ENCODE measurements at regions of chr16 and their contacts with region 1.

Region 1: GRCh38 chr16:71412270-71413160 is 29.3 kb downstream of the TLE7 start:
- DNase-seq: peak in 1 of 2 donors; percentile 60
- ATAC-seq: peak; percentile 59
- H3K4me3 ChIP-seq: no peak overlapping the region
- H3K27ac ChIP-seq: no peak overlapping the region
- H3K4me1 ChIP-seq: no peaks in the 10 kb centered on the region
- H3K27me3 ChIP-seq: no peaks in the 10 kb centered on the region

Region 2: DNA sequence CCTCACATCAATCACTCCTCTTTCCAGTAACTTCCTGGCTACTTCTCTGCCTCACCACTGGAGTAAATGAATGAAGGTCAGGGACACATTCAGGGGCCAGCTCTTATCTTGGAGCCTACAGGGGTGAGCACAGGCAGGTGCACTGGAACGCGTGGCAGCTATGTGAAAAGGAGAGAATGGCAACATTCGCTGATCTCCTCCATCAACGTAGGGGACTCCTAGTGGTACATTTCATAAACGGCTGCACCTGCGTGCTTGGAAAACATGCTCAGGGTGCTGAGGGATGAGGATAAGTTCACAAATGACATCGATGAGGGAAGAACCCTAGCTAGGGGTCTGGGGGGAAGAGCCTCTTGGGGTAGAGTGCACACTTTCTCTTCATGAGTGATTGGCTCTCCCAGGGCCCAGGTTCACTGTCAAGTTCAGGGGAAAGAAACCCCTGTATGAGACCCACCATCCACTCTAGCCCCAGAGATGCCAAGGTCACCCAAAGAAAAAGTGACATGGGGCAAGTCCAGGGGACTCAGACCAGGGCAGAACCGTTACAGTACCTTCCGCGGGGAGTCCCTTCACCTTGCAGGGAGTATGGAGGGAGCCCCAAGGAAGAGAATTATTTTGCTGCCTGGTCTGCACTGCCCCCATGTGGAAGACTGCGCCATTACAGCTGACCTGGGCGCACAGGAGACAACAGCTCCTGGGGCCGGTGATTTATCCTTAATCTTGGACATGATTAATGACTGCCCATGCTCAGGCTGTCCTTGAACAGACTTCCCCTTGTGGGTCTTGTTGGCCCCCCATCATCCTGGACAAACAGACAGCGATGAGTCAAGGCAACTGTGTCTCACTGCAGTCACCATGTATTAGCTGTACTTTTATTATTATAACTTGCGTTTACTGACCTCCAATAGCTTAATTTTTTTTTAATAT is 641.6 kb before region 1 on chr16:
- intact Hi-C with region 1: no loop called
- DNase-seq: peak in 1 of 2 donors; percentile 85
- ATAC-seq: peak; percentile 81
- H3K4me3 ChIP-seq: no peak overlapping the region
- H3K27ac ChIP-seq: no peak overlapping the region
- H3K4me1 ChIP-seq: no peaks in the 10 kb centered on the region
- H3K27me3 ChIP-seq: no peaks in the 10 kb centered on the region

Region 3: GRCh38 chr16:71499775-71500364 is 87.4 kb after region 1 on chr16:
- intact Hi-C with region 1: loop called (anchors 2 kb)
- DNase-seq: no peak
- ATAC-seq: no peak
- H3K4me3 ChIP-seq: no peak overlapping the region
- H3K27ac ChIP-seq: no peak overlapping the region
- H3K4me1 ChIP-seq: no peaks in the 10 kb centered on the region
- H3K27me3 ChIP-seq: no peaks in the 10 kb centered on the region

Region 4: DNA sequence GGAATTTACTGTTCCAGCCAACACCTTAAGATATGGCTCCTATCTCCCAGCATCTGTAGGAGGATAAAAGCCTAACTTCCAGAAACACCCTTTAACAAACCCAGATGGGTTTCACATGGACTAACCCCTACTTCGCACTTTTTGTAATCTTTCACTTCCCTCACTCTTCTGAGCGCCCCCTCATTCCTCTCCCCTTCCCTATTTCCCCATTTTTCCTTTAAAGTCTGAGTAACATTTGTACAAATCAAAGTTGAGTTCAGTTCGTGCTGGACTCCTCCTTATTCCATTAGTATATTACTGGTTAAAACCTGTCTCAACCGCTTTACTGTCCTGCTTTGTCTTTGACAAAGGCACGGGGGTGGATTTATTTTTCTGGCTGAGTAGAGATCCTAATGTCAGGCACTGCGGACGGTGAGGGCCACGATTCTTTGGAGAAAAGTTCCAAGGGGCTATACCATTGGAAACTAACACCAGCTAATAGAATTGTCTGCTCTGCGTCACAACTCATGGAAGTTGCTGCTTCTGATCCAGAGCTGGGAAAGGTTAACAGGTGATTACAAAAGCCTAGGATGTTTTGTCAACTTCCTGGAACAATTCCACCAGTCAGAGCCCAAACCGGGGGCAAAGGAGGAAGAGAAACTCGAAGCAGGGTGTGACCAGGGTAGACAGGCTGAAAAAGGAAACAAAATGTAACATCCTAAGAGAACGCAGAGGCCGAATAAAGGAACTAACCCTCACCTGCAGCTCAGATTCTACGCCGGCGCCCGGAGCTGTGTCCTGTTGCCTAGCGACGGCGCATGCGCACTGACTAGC is 151.8 kb after region 1 on chr16:
- intact Hi-C with region 1: no loop called
- DNase-seq: peak in 1 of 2 donors; percentile 97
- ATAC-seq: peak; percentile 94
- H3K4me3 ChIP-seq: peak overlapping the region; percentile 38 to 62
- H3K27ac ChIP-seq: no peak overlapping the region
- H3K4me1 ChIP-seq: no peaks in the 10 kb centered on the region
- H3K27me3 ChIP-seq: no peaks in the 10 kb centered on the region

Measured in aorta (tissue), 5 donors.